Spleen (tissue), 13 donors: ENCODE measurements at regions of chr11 and their contacts with region 1.

Region 1: DNA sequence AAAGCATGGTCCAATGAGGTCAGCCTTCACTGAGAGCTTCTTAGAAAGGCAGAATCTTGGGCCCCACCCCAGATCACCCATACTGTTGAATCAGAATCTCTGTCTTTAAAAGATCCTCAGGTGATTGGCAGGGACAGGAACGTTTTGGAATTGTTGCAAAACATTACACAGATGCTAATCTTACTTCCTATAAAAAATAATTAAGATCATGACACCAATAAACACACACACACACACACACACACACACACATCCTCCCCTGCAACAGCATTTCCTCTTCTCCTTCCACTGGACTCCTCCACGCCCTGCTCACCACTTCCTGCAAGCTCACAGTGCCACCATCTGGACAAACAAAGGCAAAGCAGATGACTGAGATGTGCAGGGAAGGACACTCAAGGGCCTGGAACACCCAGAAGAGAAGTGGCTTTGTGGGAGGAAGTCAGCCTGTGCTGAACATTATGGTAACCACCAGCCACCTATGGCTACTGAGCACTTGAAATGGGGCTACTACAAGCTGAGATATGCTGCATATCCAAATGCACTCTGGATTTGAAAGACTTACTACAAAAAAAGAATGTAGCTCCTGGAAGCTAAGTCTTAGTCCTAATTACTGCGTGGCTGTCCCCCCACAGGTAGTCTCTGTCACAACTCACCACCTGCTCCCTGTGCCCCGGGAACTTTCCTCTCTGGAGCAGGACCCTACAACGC is 65.6 kb downstream of the BTG4 start:
- DNase-seq: peak; percentile 91
- H3K4me3 ChIP-seq: no peak overlapping the region
- H3K27ac ChIP-seq: peak overlapping the region in 5 of 8 donors; percentile 20 to 67 (median 33)
- H3K4me1 ChIP-seq: peaks cover 13 to 35% (median 19%) of the 10 kb centered on the region in 6 donors
- H3K27me3 ChIP-seq: no peaks in the 10 kb centered on the region
- CTCF ChIP-seq: peak; percentile 71 to 100 (median 88)
- POLR2A ChIP-seq: no peak

Region 2: GRCh38 chr11:110447897-110448745 is 998.4 kb before region 1 on chr11:
- intact Hi-C with region 1: loop called (anchors 10 kb)
- DNase-seq: no peak
- H3K4me3 ChIP-seq: no peak overlapping the region
- H3K27ac ChIP-seq: no peak overlapping the region
- H3K4me1 ChIP-seq: peaks cover 0 to 7% (median 0%) of the 10 kb centered on the region in 6 donors
- H3K27me3 ChIP-seq: no peaks in the 10 kb centered on the region
- CTCF ChIP-seq: peak in 7 of 11 experiments; percentile 12 to 49 (median 36)
- POLR2A ChIP-seq: no peak

Region 3: DNA sequence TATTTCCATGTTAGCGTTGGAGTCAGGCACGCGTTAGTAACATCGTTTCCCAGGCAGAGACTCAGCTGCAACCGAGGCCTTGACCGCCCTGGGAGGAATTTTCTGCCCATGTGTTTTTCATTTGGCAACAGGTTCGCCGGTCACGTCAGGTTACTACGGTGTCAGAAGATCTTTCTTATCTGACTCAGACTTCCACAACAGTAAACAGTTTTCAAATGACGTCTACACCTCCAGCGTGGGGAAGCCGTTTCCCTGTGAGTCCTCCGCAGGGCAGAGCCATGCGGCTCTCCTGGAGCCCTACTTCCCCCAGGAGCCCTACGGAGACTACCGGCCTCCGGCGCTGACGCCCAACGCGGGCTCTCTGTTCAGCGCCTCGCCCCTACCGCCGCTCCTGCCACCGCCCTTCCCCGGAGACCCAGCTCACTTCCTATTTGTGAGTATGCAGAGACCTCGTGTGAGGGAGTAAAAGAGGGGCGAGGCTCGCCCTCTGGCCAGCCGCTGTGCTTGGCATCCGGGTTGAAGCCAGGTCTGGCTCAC is 162.5 kb before region 1 on chr11:
- intact Hi-C with region 1: loop called (anchors 5 kb)
- DNase-seq: peak; percentile 81
- H3K4me3 ChIP-seq: no peak overlapping the region
- H3K27ac ChIP-seq: no peak overlapping the region
- H3K4me1 ChIP-seq: peaks cover 0 to 16% (median 8%) of the 10 kb centered on the region in 6 donors
- H3K27me3 ChIP-seq: no peaks in the 10 kb centered on the region
- CTCF ChIP-seq: no peak
- POLR2A ChIP-seq: no peak

Region 4: GRCh38 chr11:111718436-111718835 is 271.9 kb after region 1 on chr11:
- intact Hi-C with region 1: no loop called
- DNase-seq: no peak
- H3K4me3 ChIP-seq: no peak overlapping the region
- H3K27ac ChIP-seq: no peak overlapping the region
- H3K4me1 ChIP-seq: peaks cover 0 to 11% (median 0%) of the 10 kb centered on the region in 6 donors
- H3K27me3 ChIP-seq: no peaks in the 10 kb centered on the region
- CTCF ChIP-seq: no peak
- POLR2A ChIP-seq: no peak